GM12878 (cell line): ENCODE measurements at regions of chr1 and their contacts with region 1.

Region 1: GRCh38 chr1:155859234-155859829 is at the start of gene SYT11:
- DNase-seq: peak; percentile 91
- ATAC-seq: peak; percentile 80
- H3K4me3 ChIP-seq: peak within 1 kb of the TSS; percentile 83
- H3K27ac ChIP-seq: peak within 1 kb of the TSS; percentile 70
- H3K4me1 ChIP-seq: peaks cover 15% of the 10 kb centered on the region
- H3K27me3 ChIP-seq: no peaks in the 10 kb centered on the region
- CTCF ChIP-seq: no peak
- EP300 ChIP-seq: no peak
- POLR2A ChIP-seq: peak; percentile 43; the same call in 1 of the 2 replicates
- RAD21 ChIP-seq: no peak
- polyA plus RNA-seq, gene SYT11: 7.7 to 7.8 TPM

Region 2: GRCh38 chr1:155454096-155454495 is 405.2 kb before region 1 on chr1:
- CTCF ChIA-PET with region 1: no interaction called
- POLR2A ChIA-PET with region 1: no interaction called
- RAD21 ChIA-PET with region 1: no interaction called
- SMC1A ChIA-PET with region 1: no interaction called
- in situ Hi-C with region 1: no loop called
- intact Hi-C with region 1: no loop called
- DNase-seq: no peak
- ATAC-seq: no peak
- H3K4me3 ChIP-seq: no peak overlapping the region
- H3K27ac ChIP-seq: no peak overlapping the region
- H3K4me1 ChIP-seq: no peaks in the 10 kb centered on the region
- H3K27me3 ChIP-seq: no peaks in the 10 kb centered on the region
- CTCF ChIP-seq: no peak
- EP300 ChIP-seq: no peak
- POLR2A ChIP-seq: no peak
- RAD21 ChIP-seq: no peak

Region 3: DNA sequence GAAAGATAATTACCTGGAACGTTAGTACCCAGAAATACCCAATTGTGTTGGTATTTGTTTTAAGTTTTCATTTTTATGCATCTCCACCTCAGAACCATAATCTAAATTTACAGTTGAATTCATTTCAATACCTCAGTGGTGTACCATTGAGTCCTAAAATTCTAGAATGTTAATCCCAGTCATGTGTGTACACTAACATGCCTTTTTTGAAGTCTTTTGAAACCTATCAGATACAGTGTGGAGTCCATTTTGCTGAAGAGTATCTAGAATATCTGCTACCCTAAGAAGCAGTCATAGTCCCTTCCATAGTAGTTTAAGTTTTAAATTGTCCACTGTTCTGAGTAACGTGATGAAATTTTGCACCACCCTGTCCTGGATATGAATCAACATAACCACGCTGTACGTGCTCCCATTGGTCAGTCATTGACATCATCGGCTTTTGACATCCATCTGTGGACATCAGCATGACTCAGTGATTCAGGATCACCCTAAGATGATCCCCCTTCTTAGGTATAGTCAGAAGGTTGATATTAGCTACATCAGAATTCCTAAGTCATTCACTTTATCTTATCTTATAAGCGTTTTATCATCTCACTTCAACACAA is 289.2 kb before region 1 on chr1:
- CTCF ChIA-PET with region 1: no interaction called
- POLR2A ChIA-PET with region 1: no interaction called
- RAD21 ChIA-PET with region 1: no interaction called
- SMC1A ChIA-PET with region 1: no interaction called
- in situ Hi-C with region 1: no loop called
- intact Hi-C with region 1: no loop called
- DNase-seq: no peak
- ATAC-seq: peak; percentile 30; the same call in 2 of the 3 replicates
- H3K4me3 ChIP-seq: no peak overlapping the region
- H3K27ac ChIP-seq: no peak overlapping the region
- H3K4me1 ChIP-seq: no peaks in the 10 kb centered on the region; the same call in 1 of the 2 replicates
- H3K27me3 ChIP-seq: no peaks in the 10 kb centered on the region
- CTCF ChIP-seq: no peak
- EP300 ChIP-seq: no peak
- POLR2A ChIP-seq: no peak
- RAD21 ChIP-seq: no peak

Region 4: GRCh38 chr1:155884031-155884960 is 25.0 kb after region 1 on chr1:
- CTCF ChIA-PET with region 1: interaction called, 6 read pairs
- POLR2A ChIA-PET with region 1: interaction called, 22 read pairs
- RAD21 ChIA-PET with region 1: interaction called, 17 read pairs
- SMC1A ChIA-PET with region 1: interaction called, 29 read pairs
- in situ Hi-C with region 1: no loop called
- intact Hi-C with region 1: no loop called
- DNase-seq: no peak
- ATAC-seq: no peak
- H3K4me3 ChIP-seq: no peak overlapping the region
- H3K27ac ChIP-seq: no peak overlapping the region
- H3K4me1 ChIP-seq: peaks cover 7% of the 10 kb centered on the region
- H3K27me3 ChIP-seq: no peaks in the 10 kb centered on the region
- CTCF ChIP-seq: no peak
- EP300 ChIP-seq: no peak
- POLR2A ChIP-seq: no peak
- RAD21 ChIP-seq: no peak

Region 5: DNA sequence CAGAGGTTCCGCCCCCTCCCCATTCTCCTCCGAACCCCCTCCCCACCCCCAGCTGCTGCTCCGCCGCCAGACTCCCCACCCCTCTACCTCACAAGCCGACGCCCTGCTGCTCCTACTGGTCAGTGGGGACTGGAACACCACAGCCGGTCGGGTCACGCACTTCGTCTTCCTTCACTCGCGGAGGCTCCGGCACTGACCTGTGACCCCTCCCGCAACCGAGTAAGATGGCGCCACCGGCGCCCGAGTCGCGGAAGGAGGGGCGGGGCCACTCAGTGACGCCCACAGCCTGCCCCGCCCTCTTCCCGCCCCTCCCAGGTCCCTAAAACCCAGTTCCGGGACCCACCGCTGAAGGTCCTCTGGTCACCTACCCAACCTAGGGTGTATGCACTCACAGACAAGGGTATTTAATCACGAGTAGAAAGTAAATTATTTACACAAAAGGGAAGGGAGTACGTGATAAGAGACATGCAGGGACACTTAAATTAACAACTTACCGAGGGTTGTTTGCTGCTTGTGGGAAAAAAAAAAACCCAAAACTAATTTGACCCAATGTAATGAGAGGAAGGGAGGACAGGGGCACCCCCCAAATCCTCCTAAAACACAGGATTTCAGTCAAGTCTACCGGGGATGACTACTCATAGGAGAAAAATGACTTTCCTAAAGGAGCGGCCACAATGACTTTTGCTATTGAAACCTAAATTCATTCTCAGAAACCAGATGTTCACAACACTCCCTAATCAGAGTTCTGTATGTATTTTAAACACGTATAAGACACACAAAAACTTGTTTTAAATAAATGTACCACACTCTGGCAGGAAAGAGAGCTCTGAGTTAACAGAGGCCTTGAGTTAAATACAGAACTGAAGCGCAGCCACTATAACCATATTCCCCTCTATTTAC is 52.1 kb after region 1 on chr1 and contains the start of gene RIT1:
- CTCF ChIA-PET with region 1: interaction called, 3 read pairs
- POLR2A ChIA-PET with region 1: interaction called, 12 read pairs
- RAD21 ChIA-PET with region 1: interaction called, 3 read pairs
- SMC1A ChIA-PET with region 1: interaction called, 7 read pairs
- in situ Hi-C with region 1: no loop called
- intact Hi-C with region 1: loop called (anchors 2 kb)
- DNase-seq: peak; percentile 69
- ATAC-seq: peak; percentile 97
- H3K4me3 ChIP-seq: peak within 1 kb of the TSS; percentile 78
- H3K27ac ChIP-seq: peak within 1 kb of the TSS; percentile 59
- H3K4me1 ChIP-seq: peaks cover 3% of the 10 kb centered on the region; the same call in 1 of the 2 replicates
- H3K27me3 ChIP-seq: no peaks in the 10 kb centered on the region
- CTCF ChIP-seq: no peak
- EP300 ChIP-seq: peak in 1 of 2 experiments; percentile 49; a peak in 2 of 4 replicates
- POLR2A ChIP-seq: peak; percentile 96
- RAD21 ChIP-seq: 0 out of 2 replicates have a peak, but pooled peaks have one; percentile 5
- polyA plus RNA-seq, gene RIT1: 25.2 to 30.3 TPM

Region 6: DNA sequence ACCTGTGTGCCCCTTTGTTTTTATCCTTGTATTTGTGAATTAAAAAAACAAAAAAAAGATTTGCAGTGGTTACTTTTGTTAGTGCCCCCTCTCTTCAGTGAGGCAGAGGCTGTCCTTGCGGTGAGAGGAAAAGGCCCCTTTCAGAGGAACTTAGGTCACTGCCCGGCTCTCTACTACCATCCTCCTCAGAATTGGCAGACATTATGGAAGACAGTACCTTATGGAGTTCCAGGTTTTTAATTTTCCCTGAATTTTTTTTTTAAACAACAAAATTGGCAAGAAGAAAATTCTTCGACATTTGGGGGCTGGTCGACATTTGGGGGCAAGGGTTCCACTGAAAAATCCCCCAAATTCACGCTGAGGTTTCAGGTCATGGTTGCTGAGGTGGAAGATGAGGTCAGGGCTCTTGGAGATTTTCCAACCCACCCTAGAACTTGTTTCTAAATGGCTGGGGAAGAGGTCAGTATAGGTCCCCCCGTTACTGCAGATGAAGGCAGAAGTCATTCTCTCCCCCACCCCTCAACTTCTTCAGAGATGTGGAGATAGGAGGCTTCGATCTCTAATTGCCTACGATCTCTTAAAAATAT is 87.4 kb after region 1 on chr1:
- CTCF ChIA-PET with region 1: no interaction called
- POLR2A ChIA-PET with region 1: interaction called, 12 read pairs
- RAD21 ChIA-PET with region 1: no interaction called
- SMC1A ChIA-PET with region 1: interaction called, 5 read pairs
- in situ Hi-C with region 1: no loop called
- intact Hi-C with region 1: no loop called
- DNase-seq: no peak
- ATAC-seq: peak; percentile 49
- H3K4me3 ChIP-seq: peak overlapping the region; percentile 12
- H3K27ac ChIP-seq: peak overlapping the region; percentile 79
- H3K4me1 ChIP-seq: peaks cover 50% of the 10 kb centered on the region
- H3K27me3 ChIP-seq: no peaks in the 10 kb centered on the region
- CTCF ChIP-seq: no peak
- EP300 ChIP-seq: no peak; a peak in 1 of 4 replicates
- POLR2A ChIP-seq: no peak
- RAD21 ChIP-seq: no peak

Region 7: GRCh38 chr1:155978325-155978972 is 119.1 kb after region 1 on chr1 and contains the start of gene ARHGEF2:
- CTCF ChIA-PET with region 1: interaction called, 3 read pairs
- POLR2A ChIA-PET with region 1: interaction called, 15 read pairs
- RAD21 ChIA-PET with region 1: interaction called, 13 read pairs
- SMC1A ChIA-PET with region 1: interaction called, 5 read pairs
- in situ Hi-C with region 1: no loop called
- intact Hi-C with region 1: no loop called
- DNase-seq: no peak
- ATAC-seq: peak; percentile 78
- H3K4me3 ChIP-seq: peak within 1 kb of the TSS; percentile 100
- H3K27ac ChIP-seq: peak within 1 kb of the TSS; percentile 97
- H3K4me1 ChIP-seq: peaks cover 28% of the 10 kb centered on the region
- H3K27me3 ChIP-seq: no peaks in the 10 kb centered on the region
- CTCF ChIP-seq: peak in 2 of 3 experiments; percentile 19 to 27; a peak in 4 of 6 replicates
- EP300 ChIP-seq: no peak
- POLR2A ChIP-seq: peak; percentile 91
- RAD21 ChIP-seq: no peak
- polyA plus RNA-seq, gene ARHGEF2: 8.1 to 10.6 TPM

Region 8: GRCh38 chr1:156054500-156055280 is 195.4 kb after region 1 on chr1 and contains the start of gene LAMTOR2:
- CTCF ChIA-PET with region 1: interaction called, 3 read pairs
- POLR2A ChIA-PET with region 1: no interaction called
- RAD21 ChIA-PET with region 1: no interaction called
- SMC1A ChIA-PET with region 1: no interaction called
- in situ Hi-C with region 1: no loop called
- intact Hi-C with region 1: loop called (anchors 10 kb)
- DNase-seq: peak; percentile 83
- ATAC-seq: peak; percentile 84
- H3K4me3 ChIP-seq: peak within 1 kb of the TSS; percentile 93
- H3K27ac ChIP-seq: peak within 1 kb of the TSS; percentile 95
- H3K4me1 ChIP-seq: no peaks in the 10 kb centered on the region; the same call in 1 of the 2 replicates
- H3K27me3 ChIP-seq: no peaks in the 10 kb centered on the region
- CTCF ChIP-seq: no peak
- EP300 ChIP-seq: no peak
- POLR2A ChIP-seq: peak; percentile 73; the same call in 1 of the 2 replicates
- RAD21 ChIP-seq: no peak
- polyA plus RNA-seq, gene LAMTOR2: 225 to 264 TPM